ENCODE measurements at regions of chr18 and their contacts with region 1.

Region 1: GRCh38 chr18:77197073-77197472 is 52.6 kb upstream of the GALR1 start:
- DNase-seq: no peak
- H3K4me3 ChIP-seq: no peak overlapping the region
- H3K27ac ChIP-seq: no peak overlapping the region
- H3K4me1 ChIP-seq: no peaks in the 10 kb centered on the region
- H3K27me3 ChIP-seq: no peaks in the 10 kb centered on the region
- CTCF ChIP-seq: no peak
- EP300 ChIP-seq: no peak
- POLR2A ChIP-seq: no peak

Region 2: GRCh38 chr18:77151772-77152520 is 45.1 kb before region 1 on chr18:
- intact Hi-C with region 1: loop called (anchors 5 kb)
- DNase-seq: no peak
- H3K4me3 ChIP-seq: no peak overlapping the region
- H3K27ac ChIP-seq: no peak overlapping the region
- H3K4me1 ChIP-seq: no peaks in the 10 kb centered on the region
- H3K27me3 ChIP-seq: no peaks in the 10 kb centered on the region
- CTCF ChIP-seq: no peak
- EP300 ChIP-seq: no peak
- POLR2A ChIP-seq: no peak

Region 3: DNA sequence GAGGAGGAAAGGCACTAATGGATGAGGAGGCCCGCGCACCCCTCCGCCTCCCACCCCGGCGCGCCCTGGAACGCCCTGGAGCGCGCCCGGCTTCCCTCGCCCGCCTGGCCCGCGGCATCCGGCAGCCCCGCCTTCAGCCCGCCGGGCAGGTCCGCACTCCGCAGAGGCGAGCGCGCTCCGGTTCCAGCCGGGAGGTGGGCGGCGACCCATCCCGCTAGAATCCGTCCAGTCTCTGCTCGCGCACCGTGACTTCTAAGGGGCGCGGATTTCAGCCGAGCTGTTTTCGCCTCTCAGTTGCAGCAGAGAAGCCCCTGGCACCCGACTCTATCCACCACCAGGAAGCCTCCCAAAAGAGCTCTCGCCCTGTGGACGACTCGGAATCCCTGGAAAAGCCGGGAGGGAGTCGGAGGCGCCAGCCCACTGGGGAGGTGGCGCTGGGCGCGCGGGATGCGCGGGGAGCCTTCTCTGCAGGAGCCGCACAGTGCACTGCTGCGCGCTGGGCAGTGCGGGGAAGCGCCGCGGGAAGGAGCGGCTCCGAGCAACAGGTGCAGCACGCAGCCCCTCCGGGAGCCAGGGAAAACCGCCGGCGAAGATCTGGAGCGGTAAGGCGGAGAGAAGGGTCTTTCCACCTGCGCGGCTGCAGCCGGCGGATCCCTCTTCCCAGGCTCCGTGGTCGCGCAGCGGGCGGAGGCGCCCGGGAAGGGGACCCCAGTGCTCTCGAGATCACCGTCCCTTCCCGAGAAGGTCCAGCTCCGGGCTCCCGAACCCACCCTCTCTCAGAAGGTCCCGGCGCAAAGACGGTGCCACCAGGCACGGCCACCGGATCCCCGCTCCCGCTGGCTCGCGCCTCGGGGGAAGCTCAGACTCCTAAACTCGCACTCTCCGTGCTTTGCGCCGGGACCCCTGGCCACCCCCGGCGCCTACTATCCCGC is 52.8 kb after region 1 on chr18 and contains the start of gene GALR1:
- intact Hi-C with region 1: no loop called
- DNase-seq: no peak
- H3K4me3 ChIP-seq: peak within 1 kb of the TSS in 3 of 4 donors; percentile 32 to 39 (median 33)
- H3K27ac ChIP-seq: no peak within 1 kb of the TSS
- H3K4me1 ChIP-seq: peaks cover 0 to 25% (median 21%) of the 10 kb centered on the region in 4 donors
- H3K27me3 ChIP-seq: peaks cover 14 to 63% (median 38%) of the 10 kb centered on the region in 3 donors
- CTCF ChIP-seq: no peak
- EP300 ChIP-seq: no peak
- POLR2A ChIP-seq: no peak
- total RNA-seq, gene GALR1: 0.28 to 0.71 (median 0.44) TPM

Measured in sigmoid colon (tissue), 7 donors.